A673 (cell line): ENCODE measurements at regions of chr4 and their contacts with region 1.

Region 1: GRCh38 chr4:184273166-184274147 is 55.8 kb upstream of the ENPP6 start:
- DNase-seq: no peak
- H3K4me3 ChIP-seq: no peak overlapping the region
- H3K27ac ChIP-seq: no peak overlapping the region
- H3K4me1 ChIP-seq: peaks cover 12% of the 10 kb centered on the region
- H3K27me3 ChIP-seq: no peaks in the 10 kb centered on the region
- CTCF ChIP-seq: no peak

Region 2: DNA sequence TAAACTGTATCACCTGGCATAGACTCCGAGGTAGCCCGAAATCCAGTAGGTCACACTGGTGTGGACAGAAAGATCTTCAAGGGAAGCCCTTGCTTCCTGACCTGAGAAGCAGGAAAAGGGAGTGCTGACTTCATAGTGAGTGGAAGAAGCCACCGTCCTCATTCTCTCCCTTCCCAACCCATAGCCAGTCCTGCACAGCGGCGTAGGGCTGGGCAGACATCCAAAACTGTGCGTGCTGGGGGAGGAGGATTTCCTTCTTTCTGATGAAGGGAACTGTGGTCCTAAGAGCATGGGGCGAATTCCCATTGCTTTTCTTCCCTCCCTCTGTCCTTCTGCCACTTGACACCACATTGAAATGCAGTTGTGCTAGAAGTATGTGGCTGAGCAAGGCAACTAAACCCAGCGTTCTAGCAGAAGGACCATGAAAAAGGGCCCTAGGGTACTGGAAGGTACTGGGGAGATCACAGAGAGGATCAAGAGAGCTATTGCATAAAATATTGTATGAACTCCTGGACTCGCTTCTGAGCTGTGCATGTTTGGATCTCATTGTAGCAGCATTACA is 301.4 kb before region 1 on chr4:
- CTCF ChIA-PET with region 1: no interaction called
- POLR2A ChIA-PET with region 1: no interaction called
- intact Hi-C with region 1: no loop called
- DNase-seq: peak; percentile 40
- H3K4me3 ChIP-seq: no peak overlapping the region
- H3K27ac ChIP-seq: no peak overlapping the region
- H3K4me1 ChIP-seq: no peaks in the 10 kb centered on the region
- H3K27me3 ChIP-seq: no peaks in the 10 kb centered on the region
- CTCF ChIP-seq: no peak

Region 3: DNA sequence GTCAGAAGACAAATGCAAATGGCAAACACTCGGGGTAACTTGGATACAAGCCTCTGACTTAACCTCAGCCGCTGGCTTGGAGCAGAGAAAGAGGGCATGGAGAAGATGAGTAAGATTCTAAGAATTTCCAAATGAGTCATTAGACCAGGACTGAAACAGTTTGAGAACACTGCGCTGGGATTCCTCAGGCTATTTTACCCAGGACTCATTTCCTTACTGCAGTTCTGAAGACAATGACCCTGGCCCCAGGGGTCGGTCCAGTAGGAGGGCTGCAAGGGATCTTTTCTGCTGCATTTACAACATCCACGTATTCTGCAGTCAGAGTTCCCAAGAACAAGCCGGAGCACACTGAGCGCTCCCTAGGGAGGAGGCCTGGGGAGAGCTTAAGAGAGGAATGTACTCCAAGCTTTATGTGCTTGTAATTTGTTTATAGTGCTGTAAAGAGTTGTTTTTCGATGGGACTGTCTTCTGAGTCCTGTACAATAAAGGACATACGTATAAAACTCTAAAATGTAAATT is 1565.8 kb after region 1 on chr4:
- CTCF ChIA-PET with region 1: no interaction called
- POLR2A ChIA-PET with region 1: interaction called, 12 read pairs
- intact Hi-C with region 1: no loop called
- DNase-seq: peak; percentile 88
- H3K4me3 ChIP-seq: no peak overlapping the region
- H3K27ac ChIP-seq: no peak overlapping the region
- H3K4me1 ChIP-seq: peaks cover 17% of the 10 kb centered on the region
- H3K27me3 ChIP-seq: no peaks in the 10 kb centered on the region
- CTCF ChIP-seq: no peak